Activated CD4-positive, alpha-beta memory T cell treated with anti-CD3 and anti-CD28 coated beads, Interleukin-2, amount 10 ng/mL, durations not matched to agents 7 days and 5 days (primary cell): ENCODE measurements at regions of chr10 and their contacts with region 1.

Region 1: GRCh38 chr10:13099666-13100348 is at the start of gene OPTN:
- DNase-seq: peak; percentile 83
- H3K4me3 Mint-ChIP-seq: peak within 1 kb of the TSS; percentile 92
- H3K27ac Mint-ChIP-seq: peak within 1 kb of the TSS; percentile 91
- H3K4me1 Mint-ChIP-seq: peaks cover 48% of the 10 kb centered on the region
- H3K27me3 Mint-ChIP-seq: no peaks in the 10 kb centered on the region
- total RNA-seq, gene OPTN: 196 to 197 TPM

Region 2: GRCh38 chr10:12981570-12981969 is 118.2 kb before region 1 on chr10:
- CTCF ChIA-PET with region 1: no interaction called
- POLR2A ChIA-PET with region 1: no interaction called
- DNase-seq: no peak
- H3K4me3 Mint-ChIP-seq: no peak overlapping the region
- H3K27ac Mint-ChIP-seq: no peak overlapping the region
- H3K4me1 Mint-ChIP-seq: peaks cover 6% of the 10 kb centered on the region
- H3K27me3 Mint-ChIP-seq: peaks cover 4% of the 10 kb centered on the region

Region 3: GRCh38 chr10:13110908-13111307 is 11.1 kb after region 1 on chr10:
- CTCF ChIA-PET with region 1: interaction called, 36 read pairs
- POLR2A ChIA-PET with region 1: interaction called, 39 read pairs
- DNase-seq: no peak
- H3K4me3 Mint-ChIP-seq: no peak overlapping the region
- H3K27ac Mint-ChIP-seq: no peak overlapping the region
- H3K4me1 Mint-ChIP-seq: peaks cover 55% of the 10 kb centered on the region
- H3K27me3 Mint-ChIP-seq: no peaks in the 10 kb centered on the region

Region 4: GRCh38 chr10:13115832-13116803 is 16.3 kb after region 1 on chr10:
- CTCF ChIA-PET with region 1: interaction called, 10 read pairs
- POLR2A ChIA-PET with region 1: interaction called, 39 read pairs
- DNase-seq: peak; percentile 23
- H3K4me3 Mint-ChIP-seq: peak overlapping the region; percentile 59
- H3K27ac Mint-ChIP-seq: peak overlapping the region; percentile 83
- H3K4me1 Mint-ChIP-seq: peaks cover 32% of the 10 kb centered on the region
- H3K27me3 Mint-ChIP-seq: no peaks in the 10 kb centered on the region

Region 5: DNA sequence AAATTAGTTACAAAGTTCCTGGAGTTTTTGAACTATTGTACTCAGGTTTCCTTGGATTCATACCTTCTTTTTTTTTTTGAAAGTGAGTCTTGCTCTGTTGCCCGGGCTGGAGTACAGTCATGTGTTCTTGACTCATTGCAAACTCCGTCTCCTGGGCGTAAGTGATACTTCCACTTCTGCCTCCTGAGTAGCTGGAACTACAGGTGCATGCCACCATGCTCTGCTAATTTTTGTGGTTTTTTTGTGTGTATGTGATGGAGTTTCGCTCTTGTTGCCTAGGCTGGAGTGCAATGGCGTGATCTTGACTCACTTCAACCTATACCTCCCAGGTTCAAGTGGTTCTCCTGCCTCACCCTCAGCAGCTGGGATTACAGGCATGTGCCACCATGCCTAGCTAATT is 83.8 kb after region 1 on chr10:
- CTCF ChIA-PET with region 1: no interaction called
- POLR2A ChIA-PET with region 1: no interaction called
- DNase-seq: no peak
- H3K4me3 Mint-ChIP-seq: no peak overlapping the region
- H3K27ac Mint-ChIP-seq: no peak overlapping the region
- H3K4me1 Mint-ChIP-seq: peaks cover 7% of the 10 kb centered on the region
- H3K27me3 Mint-ChIP-seq: no peaks in the 10 kb centered on the region